GM18951 (cell line): ENCODE measurements at regions of chr5 and their contacts with region 1.

Region 1: DNA sequence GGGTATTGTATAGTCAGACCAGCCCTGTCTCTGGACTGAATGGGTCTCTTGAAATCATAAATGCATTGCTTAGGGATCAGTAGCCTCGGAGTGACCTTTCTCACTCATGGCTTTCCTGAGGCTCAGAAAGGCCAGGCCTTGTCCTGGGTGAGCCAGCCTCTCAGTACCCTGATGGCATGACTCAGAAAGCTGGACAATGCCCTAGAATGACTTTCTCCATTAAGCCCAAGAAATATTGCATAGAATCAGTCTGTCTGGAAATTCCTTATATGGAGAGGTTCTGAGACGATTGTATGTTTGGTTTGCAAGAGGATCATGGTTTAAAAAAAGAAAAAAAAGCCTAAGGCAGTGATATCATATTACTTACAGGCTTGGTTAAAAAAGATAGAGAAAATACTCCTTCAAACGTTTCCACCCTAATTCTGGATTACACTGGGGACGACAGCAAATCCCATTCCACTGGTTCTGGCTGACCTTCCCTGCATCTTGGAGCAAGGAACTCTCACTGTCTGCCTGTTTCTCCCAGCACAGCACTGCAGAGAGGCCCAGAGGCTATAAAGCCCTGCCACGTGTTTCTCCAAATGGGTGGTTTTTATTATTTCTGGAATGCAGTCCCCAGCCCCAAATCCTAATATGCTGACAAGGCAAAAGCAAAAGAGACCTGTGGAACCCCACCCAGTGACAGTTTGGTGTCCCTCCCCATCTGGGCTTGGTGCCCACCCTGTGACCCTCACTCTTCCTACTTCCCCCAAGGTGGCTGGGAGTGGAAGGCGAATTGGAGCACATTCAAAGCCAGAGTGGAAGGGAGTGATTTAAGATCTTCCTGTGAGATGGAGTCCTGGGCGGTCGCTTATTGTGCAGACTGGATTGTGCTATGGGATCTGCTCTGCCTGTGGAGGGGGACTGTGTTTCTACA is 34.4 kb downstream of the MAP1B start:
- POLR2A ChIP-seq: no peak

Region 2: GRCh38 chr5:72244862-72245371 is 103.2 kb after region 1 on chr5:
- in situ Hi-C with region 1: loop called (anchors 10 kb)
- POLR2A ChIP-seq: no peak